HCT116 (cell line): ENCODE measurements at regions of chr15 and their contacts with region 1.

Region 1: DNA sequence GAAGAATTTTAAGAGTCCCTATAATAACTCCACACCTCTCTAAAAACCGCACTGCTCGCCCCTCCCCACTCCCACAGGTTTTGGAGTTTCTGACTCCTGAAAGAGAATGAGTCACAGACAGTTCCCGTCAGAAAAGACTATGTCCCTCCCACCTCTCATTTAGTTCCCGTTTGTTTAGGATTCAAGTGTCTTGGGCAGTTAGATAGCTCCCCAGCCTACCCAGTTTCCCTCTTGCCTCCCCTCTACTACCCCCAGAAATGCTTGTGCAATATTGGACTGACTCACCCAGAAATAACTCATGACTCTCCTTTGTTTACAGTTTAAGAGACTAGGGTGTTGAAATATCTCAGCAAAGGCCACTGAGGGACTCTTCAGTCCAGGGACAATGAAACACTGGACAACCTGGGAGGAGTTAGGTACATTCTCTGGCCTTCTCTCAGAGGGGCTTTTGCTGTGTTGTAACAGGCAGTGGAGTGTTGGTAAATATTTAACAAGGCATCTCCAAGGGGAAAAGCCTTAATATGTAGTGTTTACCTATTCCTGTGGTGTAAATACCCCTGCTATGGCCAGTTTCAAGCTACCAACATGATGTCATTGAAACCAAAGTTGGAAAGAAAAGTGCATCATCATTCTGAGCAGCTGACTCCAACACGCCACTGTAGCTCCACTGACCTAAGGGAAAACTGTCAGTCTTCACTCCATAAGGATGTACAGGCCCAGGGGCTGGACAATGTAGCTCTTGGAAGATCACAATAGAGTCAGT is 96.1 kb upstream of the CHD2 start:
- DNase-seq: peak; percentile 99
- ATAC-seq: peak; percentile 70
- H3K4me3 ChIP-seq: peak overlapping the region; percentile 11; a peak in 2 of 4 replicates
- H3K27ac ChIP-seq: peak overlapping the region; percentile 99
- H3K4me1 ChIP-seq: peaks cover 65 to 94% of the 10 kb centered on the region in 2 experiments
- H3K27me3 ChIP-seq: no peaks in the 10 kb centered on the region
- CTCF ChIP-seq: no peak
- POLR2A ChIP-seq: no peak
- RAD21 ChIP-seq: no peak

Region 2: GRCh38 chr15:92266469-92267142 is 537.4 kb before region 1 on chr15:
- CTCF ChIA-PET with region 1: no interaction called
- POLR2A ChIA-PET with region 1: no interaction called
- RAD21 ChIA-PET with region 1: no interaction called
- intact Hi-C with region 1: no loop called
- DNase-seq: no peak
- ATAC-seq: no peak
- H3K4me3 ChIP-seq: no peak overlapping the region
- H3K27ac ChIP-seq: no peak overlapping the region
- H3K4me1 ChIP-seq: no peaks in the 10 kb centered on the region
- H3K27me3 ChIP-seq: peaks cover 10% of the 10 kb centered on the region; the same call in 1 of the 2 replicates
- CTCF ChIP-seq: no peak
- POLR2A ChIP-seq: no peak
- RAD21 ChIP-seq: no peak

Region 3: DNA sequence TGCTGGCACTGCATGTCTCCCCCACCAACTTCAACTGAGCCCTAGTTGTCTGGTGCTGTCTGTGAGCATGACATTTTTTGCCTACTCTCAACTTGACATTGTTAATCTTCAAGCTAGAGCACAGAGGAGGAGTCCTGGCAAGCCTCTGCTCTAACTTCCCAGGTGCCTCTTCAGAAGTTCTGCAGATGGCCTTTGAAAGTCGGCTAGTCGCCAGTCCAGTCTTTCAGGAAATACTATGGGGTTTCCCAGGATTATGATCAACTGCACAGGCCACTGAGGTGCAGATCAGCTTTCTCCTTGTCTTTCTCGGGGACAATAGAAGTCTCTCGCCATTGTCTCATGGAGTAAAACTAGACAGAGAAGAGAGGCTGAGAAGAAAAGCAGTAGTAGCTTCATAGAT is 323.6 kb before region 1 on chr15:
- CTCF ChIA-PET with region 1: no interaction called
- POLR2A ChIA-PET with region 1: no interaction called
- RAD21 ChIA-PET with region 1: no interaction called
- intact Hi-C with region 1: no loop called
- DNase-seq: no peak
- ATAC-seq: no peak
- H3K4me3 ChIP-seq: no peak overlapping the region
- H3K27ac ChIP-seq: no peak overlapping the region
- H3K4me1 ChIP-seq: no peaks in the 10 kb centered on the region
- H3K27me3 ChIP-seq: peaks cover 54% of the 10 kb centered on the region
- CTCF ChIP-seq: no peak
- POLR2A ChIP-seq: no peak
- RAD21 ChIP-seq: no peak

Region 4: DNA sequence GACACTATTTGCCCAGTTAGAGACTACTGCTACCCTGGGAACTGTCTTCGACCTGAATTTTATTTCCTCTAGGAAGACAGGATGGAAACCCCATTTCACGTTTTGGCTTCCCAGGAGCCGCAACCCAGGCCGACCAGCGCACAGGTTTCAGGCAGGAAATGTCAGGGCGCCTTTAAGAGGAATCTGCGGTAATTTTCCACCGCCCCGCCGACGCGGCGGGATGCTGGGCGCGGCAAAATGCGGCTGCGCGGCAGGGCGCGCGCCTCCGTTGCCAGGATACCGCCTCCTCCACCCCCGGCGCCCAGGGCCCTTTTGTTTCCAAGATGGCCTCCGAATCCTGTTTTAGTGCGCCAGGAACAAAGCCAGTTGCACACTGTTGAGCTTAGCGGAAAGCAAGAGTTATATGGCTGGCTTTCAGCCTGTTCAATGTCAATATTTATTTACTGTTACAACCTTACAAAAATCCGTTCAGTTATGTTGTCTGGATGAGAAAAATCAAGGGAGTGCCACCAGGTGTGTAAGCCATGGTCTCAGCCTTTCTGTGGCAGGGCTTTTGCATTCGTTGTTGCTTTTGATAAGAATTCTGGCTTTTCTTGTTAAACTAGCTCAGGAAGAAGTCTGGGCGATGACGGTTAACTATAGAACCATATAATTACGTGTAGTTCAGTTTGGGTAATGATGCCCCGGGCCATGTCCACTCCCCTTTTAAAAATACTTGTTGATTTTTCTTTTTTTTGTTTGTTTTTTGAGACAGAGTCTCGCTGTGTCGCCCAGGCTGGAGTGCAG is 16.4 kb after region 1 on chr15:
- CTCF ChIA-PET with region 1: interaction called, 11 read pairs
- POLR2A ChIA-PET with region 1: interaction called, 31 read pairs
- RAD21 ChIA-PET with region 1: no interaction called
- intact Hi-C with region 1: loop called (anchors 2 kb)
- DNase-seq: peak; percentile 83
- ATAC-seq: peak; percentile 77
- H3K4me3 ChIP-seq: peak overlapping the region; percentile 57 to 58
- H3K27ac ChIP-seq: peak overlapping the region; percentile 83
- H3K4me1 ChIP-seq: peaks cover 41 to 66% of the 10 kb centered on the region in 2 experiments
- H3K27me3 ChIP-seq: no peaks in the 10 kb centered on the region
- CTCF ChIP-seq: no peak
- POLR2A ChIP-seq: peak; percentile 79
- RAD21 ChIP-seq: no peak; the same call in 1 of the 2 replicates

Region 5: DNA sequence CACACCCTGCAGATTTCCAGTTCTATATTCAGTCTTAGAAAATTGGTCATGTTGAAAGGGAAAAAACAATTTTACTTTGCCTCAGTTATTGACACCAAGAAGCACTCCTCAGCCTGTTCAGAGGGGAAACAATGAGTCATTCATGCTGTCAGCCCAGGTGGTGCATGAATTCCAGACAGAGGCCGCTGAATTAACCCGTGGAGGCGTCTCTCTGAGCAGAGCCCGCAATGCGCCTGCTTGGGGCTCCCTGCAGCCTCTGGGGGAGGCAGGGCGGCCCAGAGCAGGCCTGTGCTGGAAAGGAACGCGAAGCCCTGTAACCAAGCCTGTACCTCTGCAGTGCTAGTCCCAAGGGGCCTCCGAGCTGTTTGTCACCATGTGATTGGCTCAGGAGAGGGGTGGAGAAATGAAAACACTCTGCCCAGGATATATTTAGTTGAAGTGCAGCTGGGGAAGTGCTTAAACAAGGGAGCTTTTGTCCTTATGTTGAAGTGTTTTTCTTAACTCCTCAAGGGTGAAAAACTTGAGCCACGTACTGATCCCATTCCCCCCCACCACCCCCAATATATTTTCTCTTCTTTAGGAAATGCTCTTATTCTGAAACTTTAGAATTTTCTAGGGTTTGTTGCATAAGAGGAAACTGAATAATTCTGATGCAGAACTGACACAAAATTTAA is 27.8 kb after region 1 on chr15:
- CTCF ChIA-PET with region 1: interaction called, 5 read pairs
- POLR2A ChIA-PET with region 1: interaction called, 12 read pairs
- RAD21 ChIA-PET with region 1: no interaction called
- intact Hi-C with region 1: no loop called
- DNase-seq: peak; percentile 95
- ATAC-seq: peak; percentile 99
- H3K4me3 ChIP-seq: peak overlapping the region in 1 of 2 experiments; percentile 21
- H3K27ac ChIP-seq: peak overlapping the region; percentile 92
- H3K4me1 ChIP-seq: peaks cover 26 to 32% of the 10 kb centered on the region in 2 experiments
- H3K27me3 ChIP-seq: no peaks in the 10 kb centered on the region
- CTCF ChIP-seq: no peak
- POLR2A ChIP-seq: no peak
- RAD21 ChIP-seq: peak; percentile 43; the same call in 1 of the 2 replicates

Region 6: DNA sequence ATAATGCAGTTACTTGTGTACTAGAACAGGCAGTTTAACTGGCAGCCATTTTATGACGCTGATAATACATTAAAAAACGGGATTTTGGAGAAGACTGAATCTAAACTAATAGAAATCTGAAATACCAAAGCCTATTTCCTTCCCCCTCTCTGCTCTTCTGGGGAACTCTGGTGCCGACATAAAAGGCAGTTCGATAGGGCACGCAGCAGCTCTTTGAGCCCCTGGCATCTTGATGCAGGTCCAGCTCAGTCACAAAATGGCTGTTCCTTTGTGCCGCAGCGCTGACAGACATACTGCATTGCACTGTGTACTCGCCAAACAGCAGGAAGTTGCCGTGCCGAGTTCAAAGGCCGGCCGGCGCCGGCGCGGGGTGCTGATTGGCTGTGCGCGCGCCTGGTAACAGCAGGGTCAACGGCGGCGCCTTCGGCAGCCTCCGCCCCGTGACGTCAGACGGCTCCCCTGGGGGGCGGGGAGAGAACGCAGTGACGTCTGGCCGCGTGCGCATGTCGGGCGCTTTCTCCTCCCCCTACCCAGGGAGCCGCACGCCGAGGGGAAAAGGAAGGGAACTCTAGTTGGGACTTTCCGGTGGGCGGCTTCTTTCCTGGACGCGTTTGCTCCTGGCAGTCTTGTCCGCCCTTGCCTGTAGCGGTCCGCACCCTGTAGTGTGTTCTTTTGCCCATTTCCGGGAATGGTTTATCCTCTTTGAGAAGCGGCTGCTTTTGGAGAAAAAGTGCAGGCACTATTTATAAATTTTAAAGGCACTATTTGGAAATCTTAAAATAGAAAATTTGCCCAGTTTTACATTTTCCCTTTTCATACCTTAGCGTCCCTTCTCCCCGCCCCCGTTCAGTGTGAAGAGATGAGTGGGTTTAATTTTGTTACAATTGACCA is 100.2 kb after region 1 on chr15:
- CTCF ChIA-PET with region 1: interaction called, 14 read pairs
- POLR2A ChIA-PET with region 1: interaction called, 23 read pairs
- RAD21 ChIA-PET with region 1: interaction called, 3 to 8 read pairs
- intact Hi-C with region 1: loop called (anchors 1 kb)
- DNase-seq: peak; percentile 96
- ATAC-seq: peak; percentile 86
- H3K4me3 ChIP-seq: peak overlapping the region; percentile 69 to 72
- H3K27ac ChIP-seq: peak overlapping the region; percentile 97
- H3K4me1 ChIP-seq: peaks cover 48 to 70% of the 10 kb centered on the region in 2 experiments
- H3K27me3 ChIP-seq: no peaks in the 10 kb centered on the region
- CTCF ChIP-seq: no peak
- POLR2A ChIP-seq: peak; percentile 37
- RAD21 ChIP-seq: 0 out of 2 replicates have a peak, but pooled peaks have one; percentile 21

Region 7: DNA sequence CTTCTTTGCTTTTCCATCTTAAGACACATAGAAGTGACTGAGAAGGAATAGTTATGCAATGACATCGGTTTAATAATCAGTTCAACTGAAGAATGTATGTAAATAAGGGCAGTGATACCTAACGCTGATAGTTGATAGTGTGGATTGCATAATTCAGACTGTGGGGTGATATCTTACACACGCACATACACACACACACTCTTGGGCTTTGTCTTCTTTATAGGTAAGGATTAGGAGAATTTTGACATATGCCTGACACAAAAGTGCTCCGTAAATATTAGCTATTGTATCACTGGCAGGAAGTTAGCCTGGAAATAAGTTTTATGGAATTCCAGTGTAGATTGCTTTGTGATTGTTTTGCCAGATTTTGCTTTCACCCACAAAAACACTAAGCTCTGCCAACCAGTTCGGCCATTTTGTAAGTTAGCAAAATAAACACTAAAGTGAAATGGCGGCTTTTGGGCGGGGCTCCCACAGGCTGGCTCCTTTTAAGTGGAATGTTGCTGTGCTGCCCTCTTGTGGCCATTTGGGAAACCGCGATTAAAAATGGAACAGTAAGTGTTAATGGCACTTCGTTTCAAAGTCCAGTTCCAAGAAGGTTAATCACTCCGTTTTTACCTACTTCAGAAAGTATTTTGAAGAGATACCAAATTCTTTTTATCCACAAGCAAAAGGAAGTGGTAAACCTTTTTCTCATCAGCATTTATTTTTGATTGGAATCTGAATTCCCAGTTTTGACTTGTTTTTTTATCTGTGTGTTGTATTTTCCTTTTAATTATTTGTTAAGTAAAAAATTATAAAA is 113.8 kb after region 1 on chr15:
- CTCF ChIA-PET with region 1: interaction called, 67 read pairs
- POLR2A ChIA-PET with region 1: interaction called, 12 read pairs
- RAD21 ChIA-PET with region 1: interaction called, 3 read pairs
- intact Hi-C with region 1: no loop called
- DNase-seq: peak; percentile 90
- ATAC-seq: peak; percentile 50
- H3K4me3 ChIP-seq: no peak overlapping the region
- H3K27ac ChIP-seq: peak overlapping the region; percentile 87
- H3K4me1 ChIP-seq: peaks cover 64 to 94% of the 10 kb centered on the region in 2 experiments
- H3K27me3 ChIP-seq: no peaks in the 10 kb centered on the region
- CTCF ChIP-seq: peak; percentile 77 to 93 (median 78)
- POLR2A ChIP-seq: no peak
- RAD21 ChIP-seq: peak; percentile 93